GM12878 (cell line): ENCODE measurements at regions of chr9 and their contacts with region 1.

Region 1: DNA sequence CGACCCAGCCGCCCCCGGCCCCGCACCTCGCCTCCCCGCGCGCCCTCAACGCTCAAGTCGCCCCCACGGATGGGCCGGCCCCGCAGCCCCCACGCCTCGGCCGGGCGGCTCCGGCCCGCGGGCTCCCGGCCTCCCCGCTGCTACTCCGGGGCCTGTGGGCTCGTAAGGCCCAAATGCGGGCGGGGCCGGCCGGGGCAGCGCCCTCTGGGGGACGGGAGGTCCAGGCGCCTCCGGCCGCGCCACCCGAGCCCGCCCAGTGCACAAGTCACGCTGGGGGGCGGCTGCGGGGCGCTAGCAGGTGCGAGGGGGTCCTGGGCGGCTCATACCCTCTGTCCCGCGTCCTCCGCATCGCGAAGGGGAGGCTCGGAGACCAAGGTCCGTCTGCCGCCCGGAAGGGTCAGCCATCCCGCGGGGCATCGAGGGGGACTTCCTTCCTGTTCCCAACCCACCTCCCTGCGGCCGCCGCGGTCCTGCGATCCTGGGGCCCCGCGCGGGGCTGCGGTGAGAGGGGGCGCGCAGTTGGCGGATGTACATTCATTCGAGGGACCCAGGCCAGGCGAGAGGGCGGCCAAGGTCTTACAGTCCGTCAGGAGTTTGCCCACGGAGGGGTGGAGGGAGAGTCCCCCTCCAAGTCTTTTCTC is at the start of gene CIZ1:
- DNase-seq: no peak
- ATAC-seq: peak; percentile 98
- H3K4me3 ChIP-seq: peak within 1 kb of the TSS; percentile 74
- H3K27ac ChIP-seq: peak within 1 kb of the TSS; percentile 83
- H3K4me1 ChIP-seq: peaks cover 8% of the 10 kb centered on the region
- H3K27me3 ChIP-seq: no peaks in the 10 kb centered on the region
- CTCF ChIP-seq: peak; percentile 63 to 85 (median 68); a peak in 5 of 6 replicates
- EP300 ChIP-seq: no peak
- POLR2A ChIP-seq: peak; percentile 91
- RAD21 ChIP-seq: 0 out of 2 replicates have a peak, but pooled peaks have one; percentile 5
- polyA plus RNA-seq, gene CIZ1: 1.8 to 5.0 TPM

Region 2: GRCh38 chr9:128203024-128203706 is 11.6 kb after region 1 on chr9 and contains the start of gene DNM1:
- CTCF ChIA-PET with region 1: interaction called, 7 read pairs
- POLR2A ChIA-PET with region 1: interaction called, 11 read pairs
- RAD21 ChIA-PET with region 1: interaction called, 4 read pairs
- SMC1A ChIA-PET with region 1: interaction called, 4 read pairs
- in situ Hi-C with region 1: no loop called
- intact Hi-C with region 1: no loop called
- DNase-seq: no peak
- ATAC-seq: peak; percentile 97
- H3K4me3 ChIP-seq: peak within 1 kb of the TSS; percentile 63; the same call in 1 of the 2 replicates
- H3K27ac ChIP-seq: no peak within 1 kb of the TSS
- H3K4me1 ChIP-seq: peaks cover 7% of the 10 kb centered on the region; the same call in 1 of the 2 replicates
- H3K27me3 ChIP-seq: peaks cover 9 to 14% of the 10 kb centered on the region in 2 experiments; a peak in 3 of 4 replicates
- CTCF ChIP-seq: peak; percentile 65 to 93 (median 88); a peak in 5 of 6 replicates
- EP300 ChIP-seq: no peak
- POLR2A ChIP-seq: no peak
- RAD21 ChIP-seq: 0 out of 2 replicates have a peak, but pooled peaks have one; percentile 7
- polyA plus RNA-seq, gene DNM1: not detected

Region 3: DNA sequence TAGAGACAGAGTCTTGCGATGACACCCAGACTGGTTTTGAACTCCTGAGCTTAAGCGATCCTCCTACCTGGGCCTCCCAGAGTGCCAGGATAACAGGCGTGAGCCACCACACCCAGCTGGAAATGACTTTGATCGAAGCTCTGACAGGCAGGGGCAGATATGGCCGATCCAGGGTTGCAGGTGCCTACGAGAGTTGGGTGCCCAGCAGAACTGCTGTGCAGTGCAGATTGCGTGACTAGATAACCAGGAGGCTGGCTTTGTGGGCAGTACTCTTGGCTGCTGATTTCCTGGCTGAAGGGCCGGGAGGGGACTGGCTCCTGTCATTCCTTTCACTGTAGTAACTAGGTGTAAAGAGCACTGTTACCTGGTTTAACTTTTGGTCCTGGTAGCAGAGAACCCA is 607.4 kb after region 1 on chr9:
- CTCF ChIA-PET with region 1: no interaction called
- POLR2A ChIA-PET with region 1: no interaction called
- RAD21 ChIA-PET with region 1: no interaction called
- SMC1A ChIA-PET with region 1: no interaction called
- in situ Hi-C with region 1: no loop called
- intact Hi-C with region 1: no loop called
- DNase-seq: no peak
- ATAC-seq: no peak
- H3K4me3 ChIP-seq: no peak overlapping the region
- H3K27ac ChIP-seq: no peak overlapping the region
- H3K4me1 ChIP-seq: no peaks in the 10 kb centered on the region
- H3K27me3 ChIP-seq: no peaks in the 10 kb centered on the region
- CTCF ChIP-seq: no peak
- EP300 ChIP-seq: no peak
- POLR2A ChIP-seq: no peak
- RAD21 ChIP-seq: no peak